Right ventricle myocardium superior (tissue), 1 donor: ENCODE measurements at regions of chr5 and their contacts with region 1.

Region 1: DNA sequence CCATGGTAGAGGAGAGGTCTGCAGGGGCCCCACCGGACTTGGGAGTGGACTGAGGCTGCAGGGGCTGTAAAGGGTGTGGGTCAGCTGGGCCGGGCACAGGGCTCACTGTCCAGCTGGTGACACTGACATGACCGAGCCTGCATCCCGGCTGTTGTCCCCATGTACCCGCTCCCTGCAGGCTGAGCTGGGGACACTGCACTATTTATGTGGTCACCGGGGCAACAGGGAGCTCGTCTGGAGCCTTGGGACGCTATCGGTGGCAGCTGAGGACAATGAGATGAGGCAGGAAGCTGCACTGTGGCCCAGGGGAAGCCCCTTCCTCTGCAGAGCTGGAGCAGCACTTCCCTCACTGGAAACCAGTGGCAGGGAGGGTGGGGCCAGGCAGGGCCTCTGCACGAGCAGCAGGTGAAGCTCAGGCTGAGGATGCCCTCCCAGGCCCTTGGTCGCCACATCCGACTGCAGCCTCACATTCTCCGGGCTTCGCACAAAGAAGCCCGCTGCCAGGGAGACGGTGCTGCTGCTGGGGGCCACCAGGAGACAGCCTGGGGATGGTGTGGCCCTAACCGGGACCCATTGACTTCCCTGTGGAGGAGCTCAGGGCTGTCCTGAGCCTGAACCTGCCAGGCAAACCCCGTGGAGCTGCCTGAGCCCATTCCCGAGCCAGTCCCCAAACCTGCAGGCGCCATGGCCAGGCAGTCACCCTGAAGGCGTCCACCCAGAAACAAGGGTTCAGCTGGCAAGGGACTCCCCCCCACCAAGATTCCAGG is 26.4 kb downstream of the ZDHHC11B start:
- DNase-seq: peak; percentile 85
- ATAC-seq: peak; percentile 76

Region 2: GRCh38 chr5:691817-692528 is 66.1 kb before region 1 on chr5:
- intact Hi-C with region 1: loop called (anchors 2 kb)
- DNase-seq: no peak
- ATAC-seq: no peak

Region 3: GRCh38 chr5:873328-873727 is 115.2 kb after region 1 on chr5:
- intact Hi-C with region 1: no loop called
- DNase-seq: no peak
- ATAC-seq: no peak